ENCODE measurements at regions of chr2 and their contacts with region 1.

Region 1: DNA sequence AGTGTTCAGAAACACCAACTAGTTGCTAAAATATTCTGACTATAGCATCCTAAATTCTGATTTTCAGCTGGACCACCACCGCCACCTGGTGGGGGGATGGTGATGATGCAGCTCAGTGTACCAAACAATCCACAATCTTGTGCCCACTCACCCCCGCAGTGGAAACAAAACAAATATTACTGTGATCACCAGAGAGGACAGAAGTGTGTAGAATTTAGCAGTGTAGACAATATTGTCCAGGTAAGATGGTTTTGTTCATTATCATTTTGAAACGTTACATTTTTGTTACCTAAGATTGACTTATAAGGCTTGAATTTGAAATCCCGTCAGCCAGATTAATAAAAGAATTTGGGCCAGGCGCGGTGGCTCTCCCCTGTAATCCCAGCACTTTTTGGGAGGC is 31.7 kb upstream of the UBXN4 start:
- H3K4me3 ChIP-seq: no peak overlapping the region
- H3K27ac ChIP-seq: no peak overlapping the region
- H3K4me1 ChIP-seq: no peaks in the 10 kb centered on the region; the same call in 1 of the 2 replicates
- CTCF ChIP-seq: peak; percentile 71

Region 2: DNA sequence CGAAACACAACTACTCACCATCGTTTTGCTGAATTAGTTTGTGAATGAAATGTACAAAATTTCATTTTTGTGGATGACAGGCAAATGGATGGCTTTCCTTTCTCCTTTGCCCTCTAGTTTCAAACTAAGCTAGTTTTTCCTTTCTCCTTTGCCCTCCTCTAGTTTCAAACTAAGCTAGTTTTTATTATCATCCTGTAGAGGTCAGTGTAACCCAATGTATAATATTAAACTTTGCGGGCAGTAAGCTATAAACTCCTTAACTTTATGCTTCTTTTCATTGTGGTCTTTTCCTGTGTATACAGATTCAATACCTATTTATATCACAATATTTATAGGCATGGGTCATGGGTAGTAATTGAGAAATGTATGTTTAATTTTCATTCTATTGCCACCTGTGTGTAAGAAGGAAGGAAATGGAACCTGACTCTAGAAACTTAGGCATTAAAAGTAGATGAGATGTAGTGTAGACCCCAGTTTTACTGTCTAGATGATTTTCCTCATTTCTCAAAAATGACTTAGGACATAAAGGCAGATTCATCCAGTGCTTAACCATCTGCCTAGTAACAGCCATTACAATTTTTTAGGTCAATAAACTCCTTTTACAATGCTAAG is 720.9 kb before region 1 on chr2:
- CTCF ChIA-PET with region 1: interaction called, 18 read pairs
- POLR2A ChIA-PET with region 1: no interaction called
- H3K4me3 ChIP-seq: no peak overlapping the region
- H3K27ac ChIP-seq: no peak overlapping the region
- H3K4me1 ChIP-seq: no peaks in the 10 kb centered on the region
- CTCF ChIP-seq: no peak; the same call in 1 of the 2 replicates

Region 3: GRCh38 chr2:135010200-135010942 is 699.6 kb before region 1 on chr2:
- CTCF ChIA-PET with region 1: interaction called, 90 read pairs
- POLR2A ChIA-PET with region 1: no interaction called
- H3K4me3 ChIP-seq: no peak overlapping the region
- H3K27ac ChIP-seq: no peak overlapping the region
- H3K4me1 ChIP-seq: no peaks in the 10 kb centered on the region
- CTCF ChIP-seq: no peak

Region 4: DNA sequence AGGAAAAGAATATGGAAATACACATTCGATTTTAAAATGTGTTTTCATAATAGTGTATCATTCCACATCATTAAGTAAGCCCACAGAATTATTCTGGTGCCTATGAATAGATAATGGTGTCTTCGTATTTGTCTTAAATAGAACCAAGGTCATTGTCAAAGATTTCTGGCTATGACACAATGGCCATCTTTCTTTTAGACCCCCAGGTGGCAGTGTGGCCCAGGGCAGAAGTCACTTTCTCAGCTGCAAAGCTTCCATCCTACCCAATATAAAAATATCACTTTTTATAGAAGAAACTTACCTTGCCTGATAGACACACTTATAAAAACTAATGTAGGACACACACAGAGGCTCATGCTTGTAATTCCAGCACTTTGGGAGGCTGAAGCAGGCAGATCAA is 236.4 kb before region 1 on chr2:
- CTCF ChIA-PET with region 1: interaction called, 32 read pairs
- POLR2A ChIA-PET with region 1: no interaction called
- H3K4me3 ChIP-seq: no peak overlapping the region
- H3K27ac ChIP-seq: no peak overlapping the region
- H3K4me1 ChIP-seq: no peaks in the 10 kb centered on the region
- CTCF ChIP-seq: no peak

Region 5: DNA sequence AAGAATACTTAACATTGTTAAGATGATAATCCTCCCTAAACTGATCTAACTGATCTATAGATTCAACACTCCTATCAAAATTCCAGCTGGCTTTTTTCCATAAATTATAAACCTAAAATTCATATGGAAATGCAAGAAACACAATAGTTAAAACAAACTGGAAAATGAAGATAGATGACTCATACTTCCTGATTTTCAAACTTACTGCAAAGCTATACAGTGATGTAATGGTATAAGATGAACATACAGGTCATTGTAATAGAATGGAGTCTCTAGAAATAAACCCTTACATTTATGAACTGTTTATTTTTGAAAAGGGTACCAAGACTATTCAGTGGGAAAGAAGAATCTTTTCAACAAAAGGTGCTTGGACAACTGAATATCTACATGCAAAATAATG is 63.9 kb after region 1 on chr2:
- CTCF ChIA-PET with region 1: no interaction called
- POLR2A ChIA-PET with region 1: no interaction called
- H3K4me3 ChIP-seq: no peak overlapping the region
- H3K27ac ChIP-seq: no peak overlapping the region
- H3K4me1 ChIP-seq: no peaks in the 10 kb centered on the region
- CTCF ChIP-seq: no peak

Region 6: GRCh38 chr2:135839713-135840112 is 129.7 kb after region 1 on chr2:
- CTCF ChIA-PET with region 1: no interaction called
- POLR2A ChIA-PET with region 1: no interaction called
- H3K4me3 ChIP-seq: no peak overlapping the region
- H3K27ac ChIP-seq: no peak overlapping the region
- H3K4me1 ChIP-seq: no peaks in the 10 kb centered on the region
- CTCF ChIP-seq: no peak

Measured in HEK293 (cell line).